ENCODE measurements at regions of chr9 and their contacts with region 1.

Region 1: DNA sequence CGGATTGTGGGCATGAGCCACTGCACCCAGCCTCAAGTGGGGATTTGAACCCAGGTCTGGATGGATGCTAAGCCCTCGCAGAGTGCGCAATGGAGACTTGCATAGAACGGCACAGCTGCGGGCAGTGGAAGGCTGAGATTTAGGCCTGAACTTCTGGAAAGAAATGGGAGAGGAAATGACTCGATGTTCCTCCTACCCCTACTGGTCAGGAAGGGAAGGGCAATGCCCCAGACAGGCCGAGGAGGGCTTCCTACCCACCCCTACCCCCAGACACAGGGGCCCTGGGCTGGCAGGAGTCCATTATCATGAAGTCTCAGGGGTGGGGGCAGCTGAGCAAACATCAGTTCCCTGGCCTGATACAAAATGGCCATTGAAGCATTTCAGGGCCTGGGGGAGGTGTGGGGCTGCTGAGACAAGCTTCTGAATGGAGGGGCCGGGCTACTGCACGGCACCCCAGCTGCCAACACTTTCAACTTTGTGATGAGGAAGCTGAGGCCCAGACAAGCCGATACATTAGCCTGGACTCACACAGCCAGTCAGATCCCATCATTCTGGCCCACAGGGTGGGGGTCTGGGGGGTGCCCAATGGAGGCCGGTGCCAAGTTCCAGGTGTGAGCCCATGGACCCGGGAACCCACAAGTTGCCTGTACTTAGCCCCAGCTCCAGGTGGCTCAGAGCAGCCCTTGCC is 13.5 kb upstream of the WDR38 start:
- DNase-seq: no peak
- H3K4me3 Mint-ChIP-seq: no peak overlapping the region
- H3K27ac Mint-ChIP-seq: no peak overlapping the region
- H3K4me1 Mint-ChIP-seq: no peaks in the 10 kb centered on the region
- H3K27me3 Mint-ChIP-seq: peaks cover 17% of the 10 kb centered on the region

Region 2: DNA sequence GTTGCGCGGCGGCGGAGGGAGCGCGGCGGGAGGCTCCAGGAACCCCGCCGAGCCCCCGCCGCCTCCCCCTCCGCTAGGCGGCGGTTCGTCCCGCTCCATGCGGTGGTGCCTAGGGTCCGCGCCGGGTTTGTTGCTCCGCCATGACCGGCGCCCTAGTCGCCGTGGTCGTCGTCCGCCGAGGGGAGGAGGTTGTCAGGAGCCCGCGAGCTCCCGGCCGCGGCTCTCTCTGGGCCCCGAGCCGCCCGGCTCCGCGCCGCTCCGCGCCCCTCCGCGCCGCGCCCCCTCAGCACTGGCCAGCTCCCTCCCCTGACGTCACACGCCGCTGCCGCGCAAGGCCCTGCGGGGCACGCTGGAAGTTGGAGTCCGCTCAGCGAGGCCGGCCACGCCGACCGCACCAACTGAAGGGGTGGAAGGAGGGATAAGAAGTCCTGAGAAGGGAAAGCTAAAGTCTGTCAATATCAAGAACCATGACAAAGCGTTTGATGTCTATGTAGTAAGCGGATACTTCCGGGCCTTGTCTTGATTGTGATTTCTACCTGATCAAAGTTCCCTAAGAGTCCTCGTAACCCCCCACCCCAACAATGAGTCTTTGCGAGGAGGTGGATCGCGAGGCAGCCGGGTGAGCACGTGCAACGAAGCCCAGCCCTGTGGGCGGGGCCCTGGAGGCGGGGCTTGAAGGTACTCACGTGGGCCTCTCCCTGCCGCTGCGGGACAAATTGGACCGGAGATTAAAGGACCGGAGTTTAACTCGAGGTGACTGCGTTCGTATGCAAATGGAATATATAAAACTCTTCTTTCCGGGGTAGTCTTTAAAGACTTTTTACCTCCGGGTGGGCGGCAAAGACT is 68.5 kb before region 1 on chr9 and contains the start of gene NR6A1:
- CTCF ChIA-PET with region 1: interaction called, 10 read pairs
- POLR2A ChIA-PET with region 1: no interaction called
- DNase-seq: peak; percentile 94
- H3K4me3 Mint-ChIP-seq: peak within 1 kb of the TSS; percentile 81
- H3K27ac Mint-ChIP-seq: peak within 1 kb of the TSS; percentile 73
- H3K4me1 Mint-ChIP-seq: peaks cover 45% of the 10 kb centered on the region
- H3K27me3 Mint-ChIP-seq: peaks cover 57% of the 10 kb centered on the region
- total RNA-seq, gene NR6A1: 0.28 to 0.76 TPM